ENCODE measurements at regions of chr5 and their contacts with region 1.

Region 1: GRCh38 chr5:94524841-94525697 is 93.3 kb downstream of the KIAA0825 start:
- DNase-seq: no peak
- ATAC-seq: peak in 1 of 4 donors; percentile 65
- H3K4me3 ChIP-seq: no peak overlapping the region
- H3K27ac ChIP-seq: no peak overlapping the region
- H3K4me1 ChIP-seq: no peaks in the 10 kb centered on the region
- H3K27me3 ChIP-seq: no peaks in the 10 kb centered on the region
- CTCF ChIP-seq: peak; percentile 44

Region 2: DNA sequence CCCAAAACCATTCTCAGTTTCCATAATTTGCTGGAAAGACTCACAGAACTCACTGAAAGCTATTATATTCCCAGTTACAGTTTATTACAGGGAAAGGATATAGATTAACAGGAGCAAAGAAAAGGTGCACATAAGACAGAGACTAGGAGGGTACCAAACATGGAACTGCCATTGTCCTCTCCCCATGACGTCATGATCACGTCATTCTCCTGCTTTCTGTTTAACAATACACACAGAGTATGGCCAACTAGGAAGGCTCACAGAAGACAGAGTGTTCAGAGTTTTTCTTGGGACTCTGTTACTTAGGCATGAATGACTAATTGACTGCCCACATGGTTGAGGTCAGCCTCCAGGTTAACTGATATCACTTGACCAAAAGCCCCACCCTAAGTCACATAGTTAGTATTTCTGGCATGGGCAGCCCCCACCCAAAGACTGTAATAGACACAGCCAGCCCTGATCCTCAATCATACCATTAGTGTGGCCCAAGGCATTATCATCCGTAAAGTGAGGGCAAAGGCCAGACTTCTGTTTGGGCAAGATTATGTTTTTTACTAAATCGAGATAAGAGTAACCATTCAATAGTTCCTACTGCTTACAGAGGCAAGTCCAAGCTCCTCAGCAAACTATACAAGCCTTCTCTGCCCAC is 430.2 kb before region 1 on chr5:
- intact Hi-C with region 1: no loop called
- DNase-seq: no peak
- ATAC-seq: no peak
- H3K4me3 ChIP-seq: no peak overlapping the region
- H3K27ac ChIP-seq: no peak overlapping the region
- H3K4me1 ChIP-seq: no peaks in the 10 kb centered on the region
- H3K27me3 ChIP-seq: no peaks in the 10 kb centered on the region
- CTCF ChIP-seq: no peak

Region 3: DNA sequence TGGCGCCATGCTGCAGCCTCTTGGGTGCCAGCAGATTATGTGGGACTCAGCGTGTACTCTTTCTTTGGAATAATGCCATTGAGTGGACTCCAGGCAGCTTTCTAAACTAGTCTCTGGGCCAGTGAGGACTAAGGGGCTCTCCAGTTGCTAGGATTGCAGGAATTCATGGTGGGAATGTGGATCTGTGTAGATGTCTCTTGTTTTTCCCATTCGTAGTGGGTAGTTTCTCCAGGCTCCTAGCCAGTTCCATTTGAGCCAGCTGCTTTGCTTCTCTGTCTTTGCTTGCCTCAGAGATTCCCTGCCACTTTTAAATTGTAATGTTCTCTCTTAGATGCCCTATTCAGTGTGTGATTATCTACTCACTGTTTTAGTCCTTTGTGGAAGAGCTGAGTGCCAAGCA is 136.0 kb after region 1 on chr5:
- intact Hi-C with region 1: no loop called
- DNase-seq: no peak
- ATAC-seq: no peak
- H3K4me3 ChIP-seq: no peak overlapping the region
- H3K27ac ChIP-seq: no peak overlapping the region
- H3K4me1 ChIP-seq: no peaks in the 10 kb centered on the region
- H3K27me3 ChIP-seq: no peaks in the 10 kb centered on the region
- CTCF ChIP-seq: no peak

Region 4: GRCh38 chr5:94693043-94693822 is 168.2 kb after region 1 on chr5:
- intact Hi-C with region 1: loop called in 1 of 2 experiments (anchors 10 kb)
- DNase-seq: no peak
- ATAC-seq: peak in 2 of 4 donors; percentile 51 to 67
- H3K4me3 ChIP-seq: no peak overlapping the region
- H3K27ac ChIP-seq: no peak overlapping the region
- H3K4me1 ChIP-seq: no peaks in the 10 kb centered on the region
- H3K27me3 ChIP-seq: no peaks in the 10 kb centered on the region
- CTCF ChIP-seq: peak; percentile 39

Region 5: GRCh38 chr5:94736498-94736897 is 211.4 kb after region 1 on chr5:
- intact Hi-C with region 1: loop called in 1 of 2 experiments (anchors 5 kb)
- DNase-seq: no peak
- ATAC-seq: no peak
- H3K4me3 ChIP-seq: no peak overlapping the region
- H3K27ac ChIP-seq: no peak overlapping the region
- H3K4me1 ChIP-seq: no peaks in the 10 kb centered on the region
- H3K27me3 ChIP-seq: no peaks in the 10 kb centered on the region
- CTCF ChIP-seq: no peak